Mammary epithelial cell (primary cell): ENCODE measurements at regions of chr22 and their contacts with region 1.

Region 1: DNA sequence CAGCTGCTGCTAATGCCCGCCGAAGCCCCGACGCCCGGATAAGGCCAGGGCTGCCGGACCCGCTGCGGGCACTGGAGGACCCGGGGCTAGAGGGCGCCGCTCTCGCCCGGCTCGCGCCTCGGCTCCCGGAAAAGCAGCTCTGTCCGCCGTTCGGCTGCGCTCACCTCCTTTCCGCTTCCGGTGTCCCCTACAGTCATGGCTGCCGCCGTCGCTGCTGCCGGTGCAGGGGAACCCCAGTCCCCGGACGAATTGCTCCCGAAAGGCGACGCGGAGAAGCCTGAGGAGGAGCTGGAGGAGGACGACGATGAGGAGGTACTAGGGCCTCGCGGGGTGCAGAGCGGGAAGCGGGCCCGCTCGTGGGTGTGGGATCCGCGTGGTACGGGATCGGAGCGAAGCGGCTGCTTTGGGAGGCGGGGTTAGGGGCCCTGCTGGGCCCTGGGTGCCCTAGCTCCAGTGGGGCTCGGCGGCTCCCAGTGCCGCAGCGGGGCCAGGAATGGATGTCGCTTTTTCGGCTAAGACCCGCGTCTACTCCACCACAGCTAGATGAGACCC is at the start of gene TOMM22:
- DNase-seq: peak; percentile 85
- H3K4me3 ChIP-seq: peak within 1 kb of the TSS; percentile 68 to 95 (median 93)
- H3K27ac ChIP-seq: peak within 1 kb of the TSS; percentile 88
- H3K4me1 ChIP-seq: peaks cover 8% of the 10 kb centered on the region
- H3K27me3 ChIP-seq: no peaks in the 10 kb centered on the region
- CTCF ChIP-seq: peak; percentile 36 to 76
- total RNA-seq, gene TOMM22: 56.5 to 76.7 TPM

Region 2: GRCh38 chr22:38422611-38423511 is 259.0 kb before region 1 on chr22:
- CTCF ChIA-PET with region 1: no interaction called
- dilution Hi-C with region 1: loop called (anchors 10 kb)
- in situ Hi-C with region 1: no loop called
- intact Hi-C with region 1: no loop called
- DNase-seq: no peak
- H3K4me3 ChIP-seq: no peak overlapping the region
- H3K27ac ChIP-seq: no peak overlapping the region
- H3K4me1 ChIP-seq: no peaks in the 10 kb centered on the region
- H3K27me3 ChIP-seq: no peaks in the 10 kb centered on the region
- CTCF ChIP-seq: no peak

Region 3: DNA sequence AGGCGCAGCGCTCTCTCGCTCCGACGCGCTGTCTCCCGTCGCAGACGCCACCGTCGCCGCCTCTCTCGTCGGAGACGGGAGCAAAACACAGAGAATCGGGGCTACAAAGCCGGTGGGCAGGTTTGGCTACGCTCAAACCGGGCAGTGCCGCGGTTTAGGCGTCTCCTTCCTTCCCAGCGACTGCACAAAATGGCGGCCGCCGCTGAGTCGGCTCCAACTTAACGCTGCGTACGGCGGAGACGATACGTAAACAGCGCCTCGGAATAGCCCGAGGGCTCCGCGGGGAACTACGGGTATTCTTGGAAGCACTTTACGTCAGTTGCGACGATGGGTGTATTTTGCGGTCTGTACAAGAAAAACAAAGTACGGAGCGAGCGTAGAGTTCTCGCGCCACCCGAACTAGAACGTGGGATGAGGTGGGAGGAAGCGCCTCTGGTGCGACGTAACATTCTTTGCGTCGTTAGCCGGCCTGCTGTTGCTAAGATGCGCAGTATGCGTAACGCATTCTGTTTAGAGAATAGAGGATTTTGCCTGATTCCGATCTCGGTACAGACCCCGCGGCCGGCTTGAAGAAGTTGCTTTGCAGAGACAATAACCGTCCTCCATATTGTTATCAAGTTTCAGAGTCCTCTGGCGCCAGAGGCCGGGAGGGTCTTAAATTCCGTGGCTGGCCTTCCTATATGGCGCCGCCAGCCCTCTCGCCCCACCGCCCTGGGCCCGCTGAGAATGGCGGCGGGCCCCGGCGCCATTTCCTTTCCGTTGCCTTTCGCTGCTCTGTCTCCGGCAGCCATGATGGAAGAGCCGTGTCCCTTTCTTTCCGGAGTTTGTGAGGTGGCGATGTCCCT is 175.5 kb before region 1 on chr22 and contains the start of gene DDX17:
- CTCF ChIA-PET with region 1: no interaction called
- dilution Hi-C with region 1: no loop called
- in situ Hi-C with region 1: no loop called
- intact Hi-C with region 1: loop called (anchors 1 kb)
- DNase-seq: peak; percentile 92
- H3K4me3 ChIP-seq: peak within 1 kb of the TSS; percentile 83 to 96 (median 90)
- H3K27ac ChIP-seq: peak within 1 kb of the TSS; percentile 98
- H3K4me1 ChIP-seq: peaks cover 12% of the 10 kb centered on the region
- H3K27me3 ChIP-seq: no peaks in the 10 kb centered on the region
- CTCF ChIP-seq: no peak
- total RNA-seq, gene DDX17: 235 to 405 TPM

Region 4: DNA sequence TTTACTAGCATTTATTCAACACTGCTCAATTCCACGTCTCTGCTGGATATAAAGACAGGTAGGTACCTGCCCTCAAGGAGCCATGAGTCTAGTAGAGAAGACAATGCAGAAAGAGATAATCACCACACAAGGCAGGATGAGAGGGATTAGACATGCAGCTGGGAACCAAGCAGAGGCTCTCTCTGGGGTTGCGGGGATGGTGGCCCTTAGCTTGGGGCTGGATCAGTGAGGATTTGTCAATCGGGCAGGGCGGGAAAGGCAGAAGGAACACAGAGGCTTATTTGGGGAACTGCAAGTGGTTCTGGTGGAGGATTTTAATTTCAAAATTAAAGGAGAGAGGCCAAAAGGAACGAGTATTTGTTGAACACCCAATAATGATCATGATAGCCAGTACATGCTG is 103.4 kb before region 1 on chr22:
- CTCF ChIA-PET with region 1: no interaction called
- dilution Hi-C with region 1: loop called (anchors 10 kb)
- in situ Hi-C with region 1: no loop called
- intact Hi-C with region 1: no loop called
- DNase-seq: no peak
- H3K4me3 ChIP-seq: no peak overlapping the region
- H3K27ac ChIP-seq: no peak overlapping the region
- H3K4me1 ChIP-seq: no peaks in the 10 kb centered on the region
- H3K27me3 ChIP-seq: no peaks in the 10 kb centered on the region
- CTCF ChIP-seq: no peak

Region 5: GRCh38 chr22:38608992-38609750 is 72.7 kb before region 1 on chr22:
- CTCF ChIA-PET with region 1: no interaction called
- dilution Hi-C with region 1: loop called (anchors 5 kb)
- in situ Hi-C with region 1: no loop called
- intact Hi-C with region 1: no loop called
- DNase-seq: no peak
- H3K4me3 ChIP-seq: no peak overlapping the region
- H3K27ac ChIP-seq: no peak overlapping the region
- H3K4me1 ChIP-seq: peaks cover 7% of the 10 kb centered on the region
- H3K27me3 ChIP-seq: no peaks in the 10 kb centered on the region
- CTCF ChIP-seq: no peak

Region 6: GRCh38 chr22:38656256-38657044 is 25.4 kb before region 1 on chr22 and contains the starts of genes CBY1 and FAM227A:
- CTCF ChIA-PET with region 1: no interaction called
- dilution Hi-C with region 1: no loop called
- in situ Hi-C with region 1: no loop called
- intact Hi-C with region 1: loop called (anchors 2 kb)
- DNase-seq: peak; percentile 87
- H3K4me3 ChIP-seq: peak within 1 kb of the TSS; percentile 61 to 91 (median 81)
- H3K27ac ChIP-seq: peak within 1 kb of the TSS; percentile 96
- H3K4me1 ChIP-seq: no peaks in the 10 kb centered on the region
- H3K27me3 ChIP-seq: no peaks in the 10 kb centered on the region
- CTCF ChIP-seq: no peak
- total RNA-seq, gene CBY1: 19.5 to 34.1 TPM
- total RNA-seq, gene FAM227A: 2.1 to 5.7 TPM

Region 7: DNA sequence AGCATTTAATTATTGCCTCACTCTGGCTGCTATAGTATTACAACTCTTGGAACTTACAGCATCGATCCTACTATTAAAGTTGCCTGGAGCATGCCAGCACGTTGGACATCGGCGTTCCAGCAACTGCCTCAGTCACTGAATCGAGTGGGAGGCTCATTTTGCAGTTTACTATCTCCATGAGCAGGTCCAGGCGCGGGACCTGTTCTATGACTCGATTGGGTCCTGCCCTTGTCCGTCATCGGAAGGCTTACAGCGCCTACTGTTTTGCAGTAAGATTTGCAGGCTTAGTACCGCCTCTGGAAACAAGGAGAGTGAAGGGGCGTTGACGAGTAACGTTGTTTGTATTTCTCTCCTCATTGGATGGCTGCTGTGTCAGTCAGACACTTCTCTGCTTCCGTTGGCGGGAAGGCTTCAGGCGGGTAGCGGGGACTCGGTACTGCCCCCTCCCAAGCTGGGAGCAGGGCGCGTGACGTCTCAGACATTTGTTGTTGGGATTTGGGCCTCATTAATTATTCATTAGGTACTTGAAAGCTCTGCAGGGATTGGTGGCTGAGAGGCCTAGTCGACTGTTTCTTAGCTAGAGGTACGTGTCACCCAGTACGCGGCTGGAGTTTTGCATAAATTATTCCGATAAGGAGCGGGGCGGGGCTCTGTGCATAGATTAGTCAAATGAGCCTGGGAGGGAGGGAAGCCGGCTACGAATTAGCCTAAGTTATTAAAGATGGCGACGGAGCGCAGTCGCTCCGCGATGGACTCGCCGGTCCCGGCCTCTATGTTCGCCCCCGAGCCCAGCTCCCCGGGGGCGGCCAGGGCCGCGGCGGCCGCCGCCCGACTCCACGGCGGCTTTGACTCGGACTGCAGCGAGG is 23.6 kb after region 1 on chr22 and contains the start of gene GTPBP1:
- CTCF ChIA-PET with region 1: no interaction called
- dilution Hi-C with region 1: no loop called
- in situ Hi-C with region 1: no loop called
- intact Hi-C with region 1: loop called (anchors 1 kb)
- DNase-seq: peak; percentile 100
- H3K4me3 ChIP-seq: peak within 1 kb of the TSS; percentile 73 to 93 (median 84)
- H3K27ac ChIP-seq: peak within 1 kb of the TSS; percentile 86
- H3K4me1 ChIP-seq: peaks cover 32% of the 10 kb centered on the region
- H3K27me3 ChIP-seq: no peaks in the 10 kb centered on the region
- CTCF ChIP-seq: peak in 1 of 2 donors; percentile 14
- total RNA-seq, gene GTPBP1: 23.0 to 47.4 TPM